ENCODE measurements at regions of chr2 and their contacts with region 1.

Region 1: GRCh38 chr2:48589170-48589767 is 28.4 kb upstream of the GTF2A1L start:
- DNase-seq: peak; percentile 62
- ATAC-seq: peak; percentile 49
- H3K4me3 ChIP-seq: no peak overlapping the region
- H3K27ac ChIP-seq: no peak overlapping the region
- H3K4me1 ChIP-seq: no peaks in the 10 kb centered on the region
- H3K27me3 ChIP-seq: no peaks in the 10 kb centered on the region
- CTCF ChIP-seq: peak; percentile 88

Region 2: DNA sequence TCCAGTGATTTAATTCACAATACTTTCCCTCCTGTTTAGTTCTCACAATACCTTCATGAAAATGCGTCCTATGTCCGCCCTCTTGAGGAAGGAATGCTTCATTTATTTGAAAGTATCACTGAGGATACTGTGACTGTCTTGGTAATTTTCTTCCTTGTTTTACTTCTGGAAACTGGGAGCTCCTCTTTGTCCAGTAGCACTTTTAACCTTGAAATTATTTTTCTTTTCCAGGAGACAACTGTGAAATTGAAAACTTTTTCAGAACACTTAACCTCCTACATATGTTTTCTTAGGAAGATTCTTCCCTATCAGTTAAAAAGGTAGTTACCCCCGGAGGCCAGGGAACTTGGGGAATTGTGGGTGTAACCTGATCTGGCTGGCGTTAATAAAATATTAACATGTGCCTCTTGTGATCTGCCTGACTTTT is 118.2 kb before region 1 on chr2:
- CTCF ChIA-PET with region 1: no interaction called
- POLR2A ChIA-PET with region 1: no interaction called
- intact Hi-C with region 1: loop called (anchors 1 kb)
- DNase-seq: peak; percentile 84
- ATAC-seq: peak; percentile 84
- H3K4me3 ChIP-seq: no peak overlapping the region
- H3K27ac ChIP-seq: no peak overlapping the region
- H3K4me1 ChIP-seq: no peaks in the 10 kb centered on the region
- H3K27me3 ChIP-seq: no peaks in the 10 kb centered on the region
- CTCF ChIP-seq: peak; percentile 88

Region 3: GRCh38 chr2:48482313-48482712 is 107.0 kb before region 1 on chr2:
- CTCF ChIA-PET with region 1: no interaction called
- POLR2A ChIA-PET with region 1: no interaction called
- intact Hi-C with region 1: no loop called
- DNase-seq: no peak
- ATAC-seq: peak; percentile 62
- H3K4me3 ChIP-seq: no peak overlapping the region
- H3K27ac ChIP-seq: no peak overlapping the region
- H3K4me1 ChIP-seq: no peaks in the 10 kb centered on the region
- H3K27me3 ChIP-seq: no peaks in the 10 kb centered on the region
- CTCF ChIP-seq: no peak

Region 4: DNA sequence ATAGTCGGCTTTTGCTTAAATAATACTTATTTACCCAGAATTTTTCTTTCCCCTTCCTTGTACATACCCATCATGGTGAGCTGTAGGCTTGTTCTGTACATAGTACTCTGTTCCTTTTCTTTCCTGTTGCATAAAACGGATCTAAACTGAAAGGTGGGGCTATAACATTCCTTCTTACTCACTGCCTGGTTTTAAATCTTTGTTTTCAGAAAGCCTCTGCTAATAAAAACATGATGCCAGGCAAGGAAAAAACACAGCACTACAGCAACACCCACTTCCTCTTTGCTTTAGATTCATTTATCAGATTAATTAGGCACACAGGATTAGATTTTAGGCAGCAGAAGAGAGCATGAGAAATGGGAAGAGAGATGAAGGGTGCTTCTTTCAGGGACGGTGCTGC is 78.9 kb before region 1 on chr2:
- CTCF ChIA-PET with region 1: no interaction called
- POLR2A ChIA-PET with region 1: no interaction called
- intact Hi-C with region 1: loop called (anchors 1 kb)
- DNase-seq: peak; percentile 57
- ATAC-seq: peak; percentile 97
- H3K4me3 ChIP-seq: no peak overlapping the region
- H3K27ac ChIP-seq: peak overlapping the region; percentile 55
- H3K4me1 ChIP-seq: peaks cover 25% of the 10 kb centered on the region
- H3K27me3 ChIP-seq: no peaks in the 10 kb centered on the region
- CTCF ChIP-seq: no peak

Region 5: GRCh38 chr2:48530033-48530804 is 59.0 kb before region 1 on chr2 and contains the start of gene STON1:
- CTCF ChIA-PET with region 1: interaction called, 9 read pairs
- POLR2A ChIA-PET with region 1: no interaction called
- intact Hi-C with region 1: loop called (anchors 5 kb)
- DNase-seq: peak; percentile 12
- ATAC-seq: peak; percentile 50
- H3K4me3 ChIP-seq: peak within 1 kb of the TSS; percentile 92
- H3K27ac ChIP-seq: peak within 1 kb of the TSS; percentile 45
- H3K4me1 ChIP-seq: peaks cover 14% of the 10 kb centered on the region
- H3K27me3 ChIP-seq: no peaks in the 10 kb centered on the region
- CTCF ChIP-seq: no peak
- total RNA-seq, gene STON1: 1.2 TPM in 2 replicates

Region 6: DNA sequence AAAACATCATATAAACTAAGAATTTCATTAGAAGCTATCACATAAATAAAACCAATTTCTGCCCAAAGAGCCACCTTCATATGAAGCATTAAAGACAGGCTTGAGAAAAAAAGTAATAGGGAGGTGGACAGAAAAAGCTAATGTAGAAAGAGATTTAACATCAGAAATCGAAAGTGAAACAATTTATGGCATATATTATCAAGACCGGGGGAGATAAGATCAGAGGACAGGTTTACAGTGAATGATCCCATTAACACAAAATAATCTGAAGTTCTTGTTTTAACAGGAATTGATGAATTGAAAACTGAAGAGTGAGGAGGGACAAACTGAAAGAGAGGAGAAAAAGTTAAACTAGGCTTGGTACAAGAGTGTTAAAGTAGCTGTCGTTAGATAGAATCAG is 1351.4 kb after region 1 on chr2:
- CTCF ChIA-PET with region 1: no interaction called
- POLR2A ChIA-PET with region 1: no interaction called
- intact Hi-C with region 1: no loop called
- DNase-seq: no peak
- ATAC-seq: no peak
- H3K4me3 ChIP-seq: peak overlapping the region; percentile 72
- H3K27ac ChIP-seq: no peak overlapping the region
- H3K4me1 ChIP-seq: no peaks in the 10 kb centered on the region
- H3K27me3 ChIP-seq: no peaks in the 10 kb centered on the region
- CTCF ChIP-seq: no peak

Measured in PC-3 (cell line).